A673 (cell line): ENCODE measurements at regions of chr14 and their contacts with region 1.

Region 1: DNA sequence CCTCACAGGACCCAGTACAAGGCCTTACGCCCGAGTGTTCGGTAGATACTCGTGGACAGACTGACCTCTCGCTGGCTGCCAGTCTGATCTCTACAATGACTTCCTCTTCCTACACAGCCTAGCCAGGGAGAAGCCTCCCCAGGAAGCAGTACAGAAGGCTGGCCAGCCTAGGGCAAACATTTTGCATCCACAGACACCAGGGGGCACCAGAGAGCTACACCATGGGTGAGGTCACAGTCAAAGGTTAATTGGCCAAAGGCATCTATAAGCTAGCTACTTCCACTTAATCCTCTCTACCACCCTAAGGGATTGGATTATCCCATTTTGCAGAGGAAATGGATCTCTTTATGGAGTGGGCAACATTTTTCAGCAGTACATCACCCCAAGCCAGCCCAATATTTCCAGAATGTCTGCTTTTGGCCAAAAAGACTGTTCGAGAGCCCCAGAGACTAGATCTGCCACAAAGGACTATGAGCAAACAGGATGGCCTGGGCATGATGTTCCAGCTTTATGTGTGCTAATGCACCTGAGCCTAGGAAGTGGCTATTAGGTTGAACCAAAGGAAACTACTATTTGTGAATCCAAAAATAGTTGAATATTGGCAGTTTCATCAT is 14.6 kb upstream of the PNMA1 start:
- DNase-seq: peak; percentile 75
- H3K4me3 ChIP-seq: no peak overlapping the region
- H3K27ac ChIP-seq: no peak overlapping the region
- H3K4me1 ChIP-seq: peaks cover 34% of the 10 kb centered on the region
- H3K27me3 ChIP-seq: no peaks in the 10 kb centered on the region
- CTCF ChIP-seq: peak; percentile 89

Region 2: GRCh38 chr14:73715707-73716106 is 13.1 kb before region 1 on chr14:
- CTCF ChIA-PET with region 1: interaction called, 14 read pairs
- POLR2A ChIA-PET with region 1: no interaction called
- intact Hi-C with region 1: no loop called
- DNase-seq: no peak
- H3K4me3 ChIP-seq: no peak overlapping the region
- H3K27ac ChIP-seq: no peak overlapping the region
- H3K4me1 ChIP-seq: peaks cover 8% of the 10 kb centered on the region
- H3K27me3 ChIP-seq: no peaks in the 10 kb centered on the region
- CTCF ChIP-seq: no peak

Region 3: DNA sequence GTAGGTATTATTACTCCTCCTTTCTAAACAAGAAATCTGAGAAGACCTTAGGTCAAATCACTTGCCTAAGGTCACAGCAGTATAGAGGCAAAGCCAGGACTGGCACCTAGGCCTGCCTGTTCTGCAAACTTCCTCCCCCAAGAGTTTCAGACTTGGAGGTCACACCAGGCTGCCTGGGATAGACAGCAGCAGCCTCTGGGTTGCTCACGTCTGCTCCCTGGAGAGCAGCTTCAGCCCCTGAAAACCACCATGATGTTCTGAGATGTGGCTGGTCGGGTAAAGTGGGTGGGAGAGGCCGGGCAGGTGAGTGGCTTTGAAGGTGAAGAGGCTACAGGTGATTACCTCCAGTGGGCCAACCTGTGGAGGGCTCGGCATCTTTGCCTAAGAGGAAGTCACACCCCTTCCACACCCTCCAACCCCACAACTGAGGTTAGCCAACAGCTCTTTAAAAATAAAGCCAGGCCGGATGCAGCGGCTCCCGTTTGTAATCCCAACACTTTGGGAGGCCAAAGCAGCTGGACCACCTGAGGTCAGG is 22.4 kb after region 1 on chr14:
- CTCF ChIA-PET with region 1: no interaction called
- POLR2A ChIA-PET with region 1: no interaction called
- intact Hi-C with region 1: no loop called
- DNase-seq: no peak
- H3K4me3 ChIP-seq: no peak overlapping the region
- H3K27ac ChIP-seq: no peak overlapping the region
- H3K4me1 ChIP-seq: peaks cover 61% of the 10 kb centered on the region
- H3K27me3 ChIP-seq: no peaks in the 10 kb centered on the region
- CTCF ChIP-seq: no peak

Region 4: GRCh38 chr14:73825551-73826188 is 96.8 kb after region 1 on chr14:
- CTCF ChIA-PET with region 1: no interaction called
- POLR2A ChIA-PET with region 1: interaction called, 4 read pairs
- intact Hi-C with region 1: loop called (anchors 2 kb)
- DNase-seq: peak; percentile 77
- H3K4me3 ChIP-seq: no peak overlapping the region
- H3K27ac ChIP-seq: no peak overlapping the region
- H3K4me1 ChIP-seq: peaks cover 4% of the 10 kb centered on the region
- H3K27me3 ChIP-seq: no peaks in the 10 kb centered on the region
- CTCF ChIP-seq: peak; percentile 82

Region 5: GRCh38 chr14:74018586-74019407 is 290.0 kb after region 1 on chr14 and contains the starts of genes BBOF1 and ENTPD5:
- CTCF ChIA-PET with region 1: no interaction called
- POLR2A ChIA-PET with region 1: no interaction called
- intact Hi-C with region 1: loop called (anchors 2 kb)
- DNase-seq: peak; percentile 91
- H3K4me3 ChIP-seq: peak within 1 kb of the TSS; percentile 99
- H3K27ac ChIP-seq: peak within 1 kb of the TSS; percentile 95
- H3K4me1 ChIP-seq: no peaks in the 10 kb centered on the region
- H3K27me3 ChIP-seq: no peaks in the 10 kb centered on the region
- CTCF ChIP-seq: no peak
- total RNA-seq, gene BBOF1: 1.6 and 3.2 TPM in 2 replicates
- total RNA-seq, gene ENTPD5: 14.6 and 15.4 TPM in 2 replicates

Region 6: GRCh38 chr14:74038015-74038859 is 309.4 kb after region 1 on chr14:
- CTCF ChIA-PET with region 1: no interaction called
- POLR2A ChIA-PET with region 1: no interaction called
- intact Hi-C with region 1: loop called (anchors 2 kb)
- DNase-seq: peak; percentile 79
- H3K4me3 ChIP-seq: no peak overlapping the region
- H3K27ac ChIP-seq: no peak overlapping the region
- H3K4me1 ChIP-seq: no peaks in the 10 kb centered on the region
- H3K27me3 ChIP-seq: no peaks in the 10 kb centered on the region
- CTCF ChIP-seq: peak; percentile 75